CD14-positive monocyte (primary cell): ENCODE measurements at regions of chr9 and their contacts with region 1.

Region 1: GRCh38 chr9:96217754-96218693 is 84.0 kb downstream of the HSD17B3 start:
- DNase-seq: peak; percentile 37 to 57 (median 48)
- H3K4me3 ChIP-seq: peak overlapping the region; percentile 42 to 77 (median 52)
- H3K4me3 Mint-ChIP-seq: peak overlapping the region; percentile 78 to 87
- H3K27ac ChIP-seq: no peak overlapping the region
- H3K27ac Mint-ChIP-seq: peak overlapping the region in 3 of 7 donors; percentile 4 to 48 (median 17)
- H3K4me1 ChIP-seq: peaks cover 16 to 26% of the 10 kb centered on the region in 2 donors
- H3K4me1 Mint-ChIP-seq: peaks cover 22% of the 10 kb centered on the region
- H3K27me3 ChIP-seq: peaks cover 16 to 20% of the 10 kb centered on the region in 2 donors
- H3K27me3 Mint-ChIP-seq: peaks cover 38 to 59% (median 46%) of the 10 kb centered on the region in 3 donors
- CTCF ChIP-seq: peak; percentile 99

Region 2: DNA sequence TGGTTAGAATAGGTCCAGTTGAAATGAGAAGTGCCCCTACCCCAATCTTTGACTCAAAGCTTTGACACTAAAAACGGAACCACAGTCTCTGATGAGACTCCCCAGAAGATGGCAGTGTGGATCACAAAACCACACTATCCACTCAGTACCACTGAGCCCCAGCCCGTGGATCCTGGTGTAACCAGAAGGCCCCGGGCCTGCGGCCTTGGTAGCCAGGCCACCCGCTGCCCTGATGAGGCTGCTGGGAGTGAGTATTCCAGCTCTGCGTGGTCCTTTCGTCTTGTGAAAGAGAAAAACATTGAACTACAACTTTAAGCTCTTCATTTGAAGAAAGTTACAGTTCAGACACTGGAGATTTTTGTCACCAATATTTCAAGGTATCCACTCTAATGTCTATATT is 1536.5 kb before region 1 on chr9:
- intact Hi-C with region 1: loop called (anchors 5 to 10 kb)
- DNase-seq: peak; percentile 52 to 74 (median 68)
- H3K4me3 ChIP-seq: no peak overlapping the region
- H3K4me3 Mint-ChIP-seq: no peak overlapping the region
- H3K27ac ChIP-seq: no peak overlapping the region
- H3K27ac Mint-ChIP-seq: peak overlapping the region in 1 of 7 donors; percentile 35
- H3K4me1 ChIP-seq: no peaks in the 10 kb centered on the region
- H3K4me1 Mint-ChIP-seq: no peaks in the 10 kb centered on the region
- H3K27me3 ChIP-seq: peaks cover 2% of the 10 kb centered on the region in 2 donors
- H3K27me3 Mint-ChIP-seq: peaks cover 0 to 10% (median 3%) of the 10 kb centered on the region in 3 donors
- CTCF ChIP-seq: peak; percentile 75

Region 3: GRCh38 chr9:95726756-95727155 is 491.3 kb before region 1 on chr9:
- intact Hi-C with region 1: loop called (anchors 5 kb)
- DNase-seq: peak; percentile 1 to 5 (median 2)
- H3K4me3 ChIP-seq: no peak overlapping the region
- H3K4me3 Mint-ChIP-seq: no peak overlapping the region
- H3K27ac ChIP-seq: no peak overlapping the region
- H3K27ac Mint-ChIP-seq: no peak overlapping the region
- H3K4me1 ChIP-seq: no peaks in the 10 kb centered on the region
- H3K4me1 Mint-ChIP-seq: peaks cover 6% of the 10 kb centered on the region
- H3K27me3 ChIP-seq: peaks cover 0 to 2% of the 10 kb centered on the region in 2 donors
- H3K27me3 Mint-ChIP-seq: peaks cover 1 to 9% (median 3%) of the 10 kb centered on the region in 3 donors
- CTCF ChIP-seq: peak; percentile 78

Region 4: GRCh38 chr9:96186591-96187011 is 31.4 kb before region 1 on chr9:
- intact Hi-C with region 1: no loop called
- DNase-seq: no peak
- H3K4me3 ChIP-seq: no peak overlapping the region
- H3K4me3 Mint-ChIP-seq: no peak overlapping the region
- H3K27ac ChIP-seq: no peak overlapping the region
- H3K27ac Mint-ChIP-seq: no peak overlapping the region
- H3K4me1 ChIP-seq: no peaks in the 10 kb centered on the region
- H3K4me1 Mint-ChIP-seq: no peaks in the 10 kb centered on the region
- H3K27me3 ChIP-seq: no peaks in the 10 kb centered on the region
- H3K27me3 Mint-ChIP-seq: peaks cover 8 to 19% (median 10%) of the 10 kb centered on the region in 3 donors
- CTCF ChIP-seq: no peak

Region 5: GRCh38 chr9:96327694-96328352 is 109.8 kb after region 1 on chr9:
- intact Hi-C with region 1: no loop called
- DNase-seq: peak; percentile 26 to 55 (median 44)
- H3K4me3 ChIP-seq: no peak overlapping the region
- H3K4me3 Mint-ChIP-seq: no peak overlapping the region
- H3K27ac ChIP-seq: no peak overlapping the region
- H3K27ac Mint-ChIP-seq: no peak overlapping the region
- H3K4me1 ChIP-seq: no peaks in the 10 kb centered on the region
- H3K4me1 Mint-ChIP-seq: no peaks in the 10 kb centered on the region
- H3K27me3 ChIP-seq: no peaks in the 10 kb centered on the region
- H3K27me3 Mint-ChIP-seq: peaks cover 0 to 2% (median 2%) of the 10 kb centered on the region in 3 donors
- CTCF ChIP-seq: peak; percentile 92

Region 6: GRCh38 chr9:96674914-96675538 is 457.0 kb after region 1 on chr9:
- intact Hi-C with region 1: no loop called
- DNase-seq: no peak
- H3K4me3 ChIP-seq: no peak overlapping the region
- H3K4me3 Mint-ChIP-seq: no peak overlapping the region
- H3K27ac ChIP-seq: no peak overlapping the region
- H3K27ac Mint-ChIP-seq: no peak overlapping the region
- H3K4me1 ChIP-seq: no peaks in the 10 kb centered on the region
- H3K4me1 Mint-ChIP-seq: no peaks in the 10 kb centered on the region
- H3K27me3 ChIP-seq: no peaks in the 10 kb centered on the region
- H3K27me3 Mint-ChIP-seq: peaks cover 2 to 5% (median 4%) of the 10 kb centered on the region in 3 donors
- CTCF ChIP-seq: no peak